ENCODE measurements at regions of chr1 and their contacts with region 1.

Region 1: DNA sequence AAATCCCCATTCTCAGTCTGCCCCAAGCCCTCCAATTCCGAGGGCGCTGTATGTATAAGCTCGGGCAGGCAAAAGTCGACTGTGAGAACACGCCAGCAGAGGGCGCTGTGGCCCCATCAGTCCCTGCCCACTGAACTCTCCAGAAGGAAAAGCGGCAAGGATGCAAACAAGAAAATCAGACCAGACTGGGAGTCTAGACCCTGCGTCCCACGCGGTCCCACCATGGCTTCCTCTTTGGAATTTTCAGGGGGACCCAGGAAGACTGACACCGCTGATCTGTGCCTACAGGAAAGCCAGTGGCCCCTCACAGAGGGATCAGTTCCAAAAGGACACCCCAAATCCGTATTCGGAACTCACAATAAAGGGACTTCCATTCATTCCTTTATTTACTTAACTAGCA is 19.5 kb downstream of the TEX35 start:
- DNase-seq: no peak
- ATAC-seq: peak; percentile 97
- H3K4me3 ChIP-seq: no peak overlapping the region
- H3K27ac ChIP-seq: no peak overlapping the region
- H3K4me1 ChIP-seq: no peaks in the 10 kb centered on the region
- H3K27me3 ChIP-seq: no peaks in the 10 kb centered on the region; a peak in 1 of 4 replicates
- CTCF ChIP-seq: peak; percentile 87 to 93 (median 89); a peak in 5 of 6 replicates
- EP300 ChIP-seq: no peak
- POLR2A ChIP-seq: no peak
- RAD21 ChIP-seq: peak; percentile 88

Region 2: DNA sequence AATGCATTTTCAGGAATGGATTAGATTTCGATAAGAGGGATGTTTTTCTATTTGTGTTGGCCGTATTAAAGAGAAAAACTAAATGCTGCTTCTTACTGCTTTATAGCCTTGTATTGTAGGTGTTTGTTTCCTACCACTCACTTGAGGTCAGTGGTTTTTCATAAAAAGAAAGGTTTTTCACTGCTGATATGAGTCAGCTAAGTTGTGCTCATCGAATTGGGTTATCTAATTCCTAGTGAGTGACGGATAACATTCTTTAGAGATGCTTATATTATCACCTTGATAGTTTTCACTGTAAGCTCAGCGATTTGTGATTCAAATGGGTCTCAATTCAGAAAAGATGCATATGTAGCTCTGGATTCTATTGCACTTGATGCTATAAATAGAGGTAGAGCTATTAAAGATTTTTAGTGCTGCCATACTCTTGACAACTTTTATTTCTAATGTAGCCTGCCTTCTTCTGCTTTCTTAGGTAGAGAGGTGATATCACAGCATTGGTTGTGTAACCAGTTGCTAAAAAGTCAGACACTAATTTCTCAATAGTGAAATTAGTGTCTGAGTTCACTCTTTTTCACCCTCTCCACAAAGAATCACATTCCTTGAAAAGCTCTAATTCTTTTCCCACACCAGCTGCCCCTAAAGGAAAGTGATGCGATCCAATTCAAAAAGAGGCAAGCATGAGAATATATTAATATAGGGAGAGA is 258.5 kb before region 1 on chr1:
- CTCF ChIA-PET with region 1: no interaction called
- POLR2A ChIA-PET with region 1: no interaction called
- RAD21 ChIA-PET with region 1: no interaction called
- SMC1A ChIA-PET with region 1: no interaction called
- in situ Hi-C with region 1: no loop called
- intact Hi-C with region 1: no loop called
- DNase-seq: no peak
- ATAC-seq: peak; percentile 91
- H3K4me3 ChIP-seq: no peak overlapping the region
- H3K27ac ChIP-seq: no peak overlapping the region
- H3K4me1 ChIP-seq: no peaks in the 10 kb centered on the region
- H3K27me3 ChIP-seq: no peaks in the 10 kb centered on the region
- CTCF ChIP-seq: no peak
- EP300 ChIP-seq: peak in 1 of 2 experiments; percentile 31; a peak in 1 of 4 replicates
- POLR2A ChIP-seq: no peak
- RAD21 ChIP-seq: no peak

Region 3: DNA sequence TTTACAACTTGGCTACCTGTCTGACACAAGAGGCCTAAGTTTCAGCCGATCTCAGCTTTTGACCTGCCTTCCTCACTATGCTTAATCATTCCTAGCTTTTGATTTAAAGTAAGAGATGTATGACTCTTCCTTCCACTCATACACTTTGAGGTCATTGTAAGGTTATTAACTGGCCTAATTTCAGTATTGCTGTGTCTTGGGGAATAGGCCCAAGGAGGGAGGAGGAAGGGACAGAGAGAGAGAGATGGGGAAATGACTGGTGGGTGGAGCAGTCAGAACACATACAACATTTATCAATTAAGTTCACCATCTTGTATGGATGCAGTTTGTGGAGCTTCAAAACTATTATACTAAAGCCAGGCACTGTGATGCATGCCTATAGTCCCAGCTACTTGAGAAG is 465.0 kb after region 1 on chr1:
- CTCF ChIA-PET with region 1: interaction called, 59 read pairs
- POLR2A ChIA-PET with region 1: no interaction called
- RAD21 ChIA-PET with region 1: interaction called, 39 read pairs
- SMC1A ChIA-PET with region 1: interaction called, 20 read pairs
- in situ Hi-C with region 1: loop called (anchors 5 kb)
- intact Hi-C with region 1: loop called (anchors 1 kb)
- DNase-seq: no peak
- ATAC-seq: no peak
- H3K4me3 ChIP-seq: no peak overlapping the region
- H3K27ac ChIP-seq: no peak overlapping the region
- H3K4me1 ChIP-seq: no peaks in the 10 kb centered on the region
- H3K27me3 ChIP-seq: no peaks in the 10 kb centered on the region
- CTCF ChIP-seq: no peak
- EP300 ChIP-seq: no peak
- POLR2A ChIP-seq: no peak
- RAD21 ChIP-seq: no peak